Right lobe of liver (tissue), 6 donors: ENCODE measurements at regions of chr9 and their contacts with region 1.

Region 1: DNA sequence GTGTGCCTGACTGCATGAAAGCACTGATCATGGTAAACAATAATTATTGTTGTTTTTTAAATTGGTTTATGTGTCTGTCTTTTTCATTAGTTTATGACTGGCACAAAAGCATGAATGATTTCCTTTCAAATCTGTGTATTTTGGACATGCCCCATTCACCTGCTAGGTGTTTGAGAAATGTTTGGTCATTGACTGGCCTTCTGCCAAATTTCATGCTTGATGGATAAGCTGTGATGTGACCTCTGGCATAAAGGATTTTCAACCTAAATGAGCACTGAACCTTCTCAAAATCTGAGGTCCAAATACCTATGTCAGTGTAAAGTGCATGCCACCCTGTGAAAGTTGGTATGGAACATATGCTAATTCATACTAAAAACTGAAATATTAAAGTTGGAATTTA is 204.5 kb downstream of the BRINP1 start:
- DNase-seq: no peak
- ATAC-seq: no peak
- H3K4me3 ChIP-seq: no peak overlapping the region
- H3K27ac ChIP-seq: no peak overlapping the region
- H3K4me1 ChIP-seq: no peaks in the 10 kb centered on the region
- H3K27me3 ChIP-seq: no peaks in the 10 kb centered on the region
- CTCF ChIP-seq: no peak
- POLR2A ChIP-seq: no peak

Region 2: DNA sequence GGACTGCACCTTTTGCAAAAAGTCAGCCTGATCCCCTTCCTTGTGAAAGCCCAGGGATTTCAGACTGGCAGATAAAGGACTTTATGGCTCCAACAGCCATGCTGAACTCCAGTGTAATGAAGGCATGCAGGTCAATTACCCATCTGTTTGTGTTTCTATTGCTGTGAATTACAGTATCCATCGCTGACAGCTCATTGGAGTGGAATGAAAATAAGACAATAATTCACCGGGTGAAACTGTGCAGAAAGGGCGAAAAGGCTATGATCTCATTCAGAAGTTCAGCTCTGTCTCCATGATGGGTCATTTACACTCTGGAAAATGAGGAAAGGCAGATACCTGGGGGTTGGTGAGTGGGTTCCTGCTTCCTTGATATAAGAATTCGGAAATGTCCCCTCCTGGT is 56.6 kb after region 1 on chr9:
- intact Hi-C with region 1: loop called in 1 of 2 experiments (anchors 10 kb)
- DNase-seq: no peak
- ATAC-seq: no peak
- H3K4me3 ChIP-seq: no peak overlapping the region
- H3K27ac ChIP-seq: no peak overlapping the region
- H3K4me1 ChIP-seq: no peaks in the 10 kb centered on the region
- H3K27me3 ChIP-seq: no peaks in the 10 kb centered on the region
- CTCF ChIP-seq: no peak
- POLR2A ChIP-seq: no peak

Region 3: DNA sequence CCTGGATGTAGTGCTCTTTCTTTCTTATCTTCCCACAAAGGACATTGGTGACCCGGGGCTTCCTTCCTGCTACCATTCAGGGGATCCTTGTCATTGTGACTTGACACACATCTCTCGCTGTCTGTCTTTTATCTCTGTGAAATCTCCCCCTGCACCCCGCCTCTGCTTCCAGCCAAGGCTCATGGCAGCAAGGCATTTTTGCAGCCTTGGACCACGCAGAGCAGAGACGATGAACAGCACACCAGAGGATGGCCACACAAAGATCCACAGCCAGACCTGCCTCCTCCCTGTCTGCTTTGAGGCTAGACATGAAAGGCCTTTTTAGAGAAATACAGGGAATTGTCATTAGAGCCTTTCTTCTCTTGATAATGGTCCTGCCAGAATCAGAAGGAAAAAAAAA is 866.1 kb after region 1 on chr9:
- intact Hi-C with region 1: no loop called
- DNase-seq: peak in 1 of 3 donors; percentile 16
- ATAC-seq: no peak
- H3K4me3 ChIP-seq: no peak overlapping the region
- H3K27ac ChIP-seq: no peak overlapping the region
- H3K4me1 ChIP-seq: no peaks in the 10 kb centered on the region
- H3K27me3 ChIP-seq: no peaks in the 10 kb centered on the region
- CTCF ChIP-seq: no peak
- POLR2A ChIP-seq: no peak